Lower lobe of right lung (tissue), 2 donors: ENCODE measurements at regions of chr6 and their contacts with region 1.

Region 1: DNA sequence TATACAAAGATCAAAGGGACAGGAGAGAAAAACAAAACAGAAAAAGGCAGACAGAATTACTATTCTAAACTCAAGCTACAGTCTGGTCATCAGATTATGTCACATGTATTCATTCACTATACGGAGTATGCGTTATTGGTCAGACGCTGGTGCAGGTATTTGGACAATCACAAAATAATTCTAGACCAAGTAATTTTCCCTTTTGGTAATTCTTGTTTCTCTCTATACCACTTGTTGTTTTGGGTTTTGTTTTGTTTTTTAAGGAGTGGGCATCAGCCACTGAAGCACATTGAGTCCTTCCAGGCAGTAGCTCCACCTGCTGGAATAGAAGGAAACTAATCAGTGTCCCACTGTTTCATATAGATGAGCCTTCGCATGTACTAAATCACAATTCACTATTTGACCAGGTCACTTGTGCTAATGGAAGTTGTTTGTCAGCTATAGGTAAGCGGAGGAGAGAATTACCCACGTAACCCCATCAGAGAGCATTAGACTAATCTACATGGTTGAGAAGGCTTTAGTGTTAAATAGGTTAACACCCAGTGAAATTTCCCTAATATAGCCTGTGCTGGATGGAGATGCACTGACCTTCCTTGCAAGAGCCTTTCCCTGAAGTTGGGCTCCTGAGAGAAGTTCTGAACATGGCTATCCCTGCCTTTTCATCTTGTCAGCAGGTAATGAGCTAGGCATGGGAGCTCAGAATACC is 77.9 kb downstream of the TNFAIP3 start:
- DNase-seq: no peak
- ATAC-seq: peak; percentile 78 to 89
- H3K4me3 ChIP-seq: no peak overlapping the region
- H3K27ac ChIP-seq: no peak overlapping the region
- H3K4me1 ChIP-seq: peaks cover 4% of the 10 kb centered on the region
- H3K27me3 ChIP-seq: no peaks in the 10 kb centered on the region
- CTCF ChIP-seq: peak; percentile 79

Region 2: DNA sequence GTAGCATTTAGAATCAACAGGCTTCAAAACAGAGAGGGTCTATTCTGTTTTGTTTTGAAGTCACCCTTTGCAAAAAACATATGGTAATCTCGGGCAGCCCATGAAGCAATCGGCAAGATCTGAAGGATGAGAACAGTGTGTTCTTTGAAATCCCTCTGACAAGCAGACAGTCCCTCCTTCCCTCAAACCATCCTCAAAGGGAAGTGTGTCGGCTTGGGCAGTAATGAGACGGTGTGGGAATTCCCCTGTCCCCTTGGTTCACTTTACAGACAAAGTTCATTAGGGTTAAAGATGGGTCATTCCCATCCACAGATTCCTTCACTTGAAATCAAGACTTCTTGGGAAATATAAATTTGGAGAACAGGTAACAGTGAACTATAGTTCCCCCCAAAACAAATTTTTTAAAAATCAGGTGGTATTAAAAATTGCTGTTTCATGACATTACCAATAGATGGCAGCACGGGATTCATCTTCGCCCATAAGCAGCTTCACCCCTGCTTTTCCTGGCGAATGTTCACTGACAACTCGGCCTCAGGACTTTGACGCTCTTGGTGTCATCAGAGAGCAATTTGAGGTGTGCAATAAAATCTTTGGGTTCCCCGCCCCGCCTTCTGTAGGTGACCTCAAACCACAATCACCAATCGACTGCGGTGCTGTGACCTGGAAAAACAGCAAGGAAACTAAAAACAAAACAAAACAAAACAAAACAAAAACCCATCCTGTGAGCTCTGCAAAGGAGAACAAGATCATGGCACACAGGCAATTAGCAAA is 237.2 kb before region 1 on chr6:
- intact Hi-C with region 1: loop called (anchors 10 kb)
- DNase-seq: peak; percentile 60
- ATAC-seq: peak; percentile 80 to 84
- H3K4me3 ChIP-seq: peak overlapping the region; percentile 26
- H3K27ac ChIP-seq: peak overlapping the region; percentile 3
- H3K4me1 ChIP-seq: peaks cover 13% of the 10 kb centered on the region
- H3K27me3 ChIP-seq: no peaks in the 10 kb centered on the region
- CTCF ChIP-seq: peak; percentile 71